Naive thymus-derived CD8-positive, alpha-beta T cell (primary cell): ENCODE measurements at regions of chr18 and their contacts with region 1.

Region 1: DNA sequence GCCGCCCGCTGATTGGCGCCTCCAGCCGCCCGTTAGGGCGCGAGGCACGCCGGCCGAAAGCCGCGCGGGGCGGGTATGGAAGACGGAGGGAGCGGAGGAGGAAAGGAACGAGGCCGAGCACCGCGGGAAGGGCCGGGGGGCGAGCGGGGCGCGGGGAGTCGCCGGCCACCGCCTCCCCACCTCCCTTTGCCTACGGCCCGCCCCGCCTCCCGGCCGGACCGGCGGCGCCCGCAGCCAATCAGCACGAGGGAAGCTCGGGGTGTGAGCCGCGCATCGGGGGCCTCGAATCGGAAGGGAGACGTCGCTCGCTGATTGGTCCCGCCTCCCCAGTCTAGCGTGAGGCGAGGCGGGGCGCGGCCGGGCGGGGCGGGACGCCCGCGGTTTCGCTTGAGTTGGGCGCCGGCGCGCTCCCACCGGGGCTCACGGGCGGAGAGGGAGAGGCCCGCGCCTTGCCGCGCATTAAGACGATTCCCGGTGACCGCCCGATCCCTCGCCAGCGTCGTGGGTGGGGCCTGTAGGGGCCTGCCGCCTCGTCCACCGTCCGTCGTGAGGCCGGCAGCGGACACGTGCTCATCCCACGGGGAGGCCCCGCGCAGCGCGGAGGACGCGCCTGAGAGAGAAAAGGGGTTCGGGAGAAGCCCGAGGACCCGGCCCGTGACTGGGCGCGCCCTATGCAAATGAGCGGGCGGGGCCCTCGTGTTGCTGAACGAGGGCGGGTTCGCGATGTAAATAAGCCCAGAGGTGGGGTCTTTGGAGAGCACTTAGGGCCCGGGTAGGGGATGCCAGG is 665 bp upstream of the SMAD2 start:
- DNase-seq: peak; percentile 90 to 96 (median 94)
- ATAC-seq: peak; percentile 80
- H3K4me3 Mint-ChIP-seq: peak overlapping the region; percentile 77 to 91 (median 84)
- H3K27ac Mint-ChIP-seq: peak overlapping the region; percentile 9 to 97 (median 92)
- H3K4me1 Mint-ChIP-seq: peaks cover 30 to 46% (median 41%) of the 10 kb centered on the region in 4 donors
- H3K27me3 Mint-ChIP-seq: no peaks in the 10 kb centered on the region

Region 2: DNA sequence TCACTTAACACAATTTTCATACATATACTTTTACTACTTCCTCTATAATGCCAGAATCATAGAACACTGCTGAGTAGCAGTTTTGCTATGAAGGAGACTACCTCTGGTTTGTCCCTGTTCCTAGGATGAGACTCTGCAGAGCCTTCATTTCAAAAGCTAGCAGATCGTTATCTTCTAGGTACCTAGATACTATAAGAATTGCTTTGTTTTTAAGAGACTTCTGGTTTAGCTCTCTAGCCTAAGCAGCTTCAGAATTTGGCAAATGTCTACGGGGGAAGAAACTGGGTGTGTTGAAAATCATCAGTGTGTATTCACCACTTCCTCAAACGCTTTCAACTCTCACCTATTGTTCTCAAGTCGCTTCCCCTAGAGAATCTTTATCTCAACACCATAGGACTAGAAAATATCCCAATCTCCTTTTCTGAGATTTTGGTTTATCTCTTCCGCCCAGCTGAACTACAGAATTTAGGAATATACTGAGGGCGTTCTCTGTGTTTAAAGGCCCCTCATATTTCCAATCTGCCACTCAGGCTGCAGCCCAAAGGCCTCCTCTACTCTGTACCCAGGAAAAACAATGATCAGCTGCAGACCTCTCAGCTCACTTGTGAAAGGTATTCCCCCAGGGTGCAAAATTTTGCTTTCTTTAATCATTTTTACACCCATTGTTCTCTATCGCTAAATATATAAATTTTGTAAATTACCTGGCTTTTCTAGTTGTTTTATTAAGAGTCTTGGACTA is 29.3 kb before region 1 on chr18:
- POLR2A ChIA-PET with region 1: interaction called, 36 read pairs
- DNase-seq: peak in 5 of 10 donors; percentile 7 to 75 (median 48)
- ATAC-seq: peak; percentile 96 to 97
- H3K4me3 Mint-ChIP-seq: peak overlapping the region; percentile 54 to 80 (median 68)
- H3K27ac Mint-ChIP-seq: peak overlapping the region; percentile 67 to 95 (median 92)
- H3K4me1 Mint-ChIP-seq: peaks cover 47 to 89% (median 74%) of the 10 kb centered on the region in 4 donors
- H3K27me3 Mint-ChIP-seq: no peaks in the 10 kb centered on the region

Region 3: DNA sequence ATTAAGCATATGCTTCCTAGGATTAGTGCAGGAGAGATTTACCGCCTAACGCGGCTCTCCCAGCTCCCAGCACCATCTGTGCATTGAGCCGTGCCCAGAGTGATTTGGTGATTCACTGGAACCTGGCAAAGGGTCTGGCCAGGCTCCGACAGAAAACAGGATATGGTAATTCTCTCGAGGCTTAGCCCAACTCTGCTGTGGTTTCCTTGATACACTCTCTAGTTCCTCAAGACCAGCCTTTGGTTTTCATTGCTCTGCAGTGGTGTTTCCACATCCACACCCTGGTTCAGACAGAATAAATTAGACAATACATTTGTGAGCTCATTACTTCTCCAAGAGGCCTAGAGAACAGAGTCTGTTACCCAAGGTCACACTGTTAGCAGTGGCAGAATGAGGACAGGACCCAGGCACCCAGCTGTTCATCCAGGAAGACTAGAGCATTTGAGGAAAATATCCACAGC is 22.4 kb after region 1 on chr18:
- POLR2A ChIA-PET with region 1: interaction called, 12 read pairs
- DNase-seq: peak in 4 of 10 donors; percentile 16 to 36 (median 26)
- ATAC-seq: peak; percentile 85 to 88
- H3K4me3 Mint-ChIP-seq: peak overlapping the region in 9 of 10 donors; percentile 52 to 76 (median 72)
- H3K27ac Mint-ChIP-seq: peak overlapping the region in 9 of 10 donors; percentile 74 to 93 (median 84)
- H3K4me1 Mint-ChIP-seq: peaks cover 12 to 26% (median 21%) of the 10 kb centered on the region in 4 donors
- H3K27me3 Mint-ChIP-seq: no peaks in the 10 kb centered on the region

Region 4: DNA sequence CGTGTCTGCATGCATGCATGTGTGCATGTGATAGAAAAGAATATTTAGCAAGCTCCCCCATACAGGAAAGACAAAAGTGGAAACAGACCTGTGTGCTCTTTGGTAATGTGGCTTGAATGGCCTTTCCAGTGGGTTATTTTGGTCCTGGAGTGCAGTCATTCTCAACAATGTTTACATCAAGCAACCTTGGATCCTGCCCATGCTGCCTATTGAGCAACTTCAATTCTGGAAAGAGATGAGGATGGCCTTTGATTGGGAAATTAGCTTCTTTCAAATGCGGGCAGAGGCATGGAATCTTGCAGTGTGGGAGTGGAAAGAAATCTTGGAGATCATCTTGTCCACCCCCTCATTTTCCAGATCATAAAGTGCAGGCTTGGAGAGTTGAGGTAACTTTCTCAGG is 86.5 kb after region 1 on chr18:
- POLR2A ChIA-PET with region 1: no interaction called
- DNase-seq: no peak
- ATAC-seq: no peak
- H3K4me3 Mint-ChIP-seq: no peak overlapping the region
- H3K27ac Mint-ChIP-seq: no peak overlapping the region
- H3K4me1 Mint-ChIP-seq: peaks cover 0 to 5% (median 2%) of the 10 kb centered on the region in 4 donors
- H3K27me3 Mint-ChIP-seq: peaks cover 0 to 14% (median 10%) of the 10 kb centered on the region in 5 donors